ENCODE measurements at regions of chr1 and their contacts with region 1.

Region 1: GRCh38 chr1:202716654-202717053 is 6.4 kb upstream of the SYT2 start:
- DNase-seq: no peak
- H3K4me3 ChIP-seq: no peak overlapping the region
- H3K27ac ChIP-seq: no peak overlapping the region
- H3K4me1 ChIP-seq: no peaks in the 10 kb centered on the region
- H3K27me3 ChIP-seq: no peaks in the 10 kb centered on the region
- CTCF ChIP-seq: no peak

Region 2: DNA sequence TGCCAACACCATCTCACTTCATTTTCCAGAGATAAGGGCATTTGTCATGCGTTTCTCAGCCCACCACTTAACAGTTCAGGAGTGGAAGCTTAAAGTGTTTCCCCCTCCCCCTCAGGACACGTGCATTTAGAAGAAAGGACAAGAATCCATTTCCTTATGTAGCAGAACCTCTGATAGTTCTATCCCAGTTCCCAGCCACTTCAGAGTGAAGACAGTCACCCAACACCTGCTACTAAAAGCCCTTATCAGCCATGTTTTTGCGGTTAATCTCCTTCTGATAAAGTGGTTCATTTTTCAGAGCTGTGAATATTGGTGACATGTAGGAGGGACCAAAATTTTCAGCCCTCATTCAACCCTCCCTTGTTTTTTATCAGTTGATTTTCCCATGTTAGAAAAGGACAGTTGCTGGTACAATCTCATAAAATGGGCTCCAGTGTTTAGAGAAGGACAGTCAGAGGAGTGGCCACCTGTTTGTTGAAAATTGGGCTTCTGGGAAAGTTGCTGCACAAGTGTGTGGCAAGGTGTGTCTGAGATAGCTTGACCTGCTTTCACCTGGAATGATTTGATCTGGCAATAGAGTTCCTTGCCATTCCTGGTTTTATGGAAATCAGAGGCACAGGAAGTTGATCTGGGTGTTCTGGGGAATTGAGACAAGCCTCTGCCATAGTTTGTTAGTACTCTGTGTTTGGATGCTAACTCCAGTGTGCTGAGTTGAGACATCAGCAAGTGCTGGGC is 254.1 kb before region 1 on chr1:
- CTCF ChIA-PET with region 1: interaction called, 13 read pairs
- POLR2A ChIA-PET with region 1: no interaction called
- intact Hi-C with region 1: loop called (anchors 5 kb)
- DNase-seq: no peak
- H3K4me3 ChIP-seq: no peak overlapping the region
- H3K27ac ChIP-seq: no peak overlapping the region
- H3K4me1 ChIP-seq: no peaks in the 10 kb centered on the region
- H3K27me3 ChIP-seq: no peaks in the 10 kb centered on the region
- CTCF ChIP-seq: no peak

Region 3: DNA sequence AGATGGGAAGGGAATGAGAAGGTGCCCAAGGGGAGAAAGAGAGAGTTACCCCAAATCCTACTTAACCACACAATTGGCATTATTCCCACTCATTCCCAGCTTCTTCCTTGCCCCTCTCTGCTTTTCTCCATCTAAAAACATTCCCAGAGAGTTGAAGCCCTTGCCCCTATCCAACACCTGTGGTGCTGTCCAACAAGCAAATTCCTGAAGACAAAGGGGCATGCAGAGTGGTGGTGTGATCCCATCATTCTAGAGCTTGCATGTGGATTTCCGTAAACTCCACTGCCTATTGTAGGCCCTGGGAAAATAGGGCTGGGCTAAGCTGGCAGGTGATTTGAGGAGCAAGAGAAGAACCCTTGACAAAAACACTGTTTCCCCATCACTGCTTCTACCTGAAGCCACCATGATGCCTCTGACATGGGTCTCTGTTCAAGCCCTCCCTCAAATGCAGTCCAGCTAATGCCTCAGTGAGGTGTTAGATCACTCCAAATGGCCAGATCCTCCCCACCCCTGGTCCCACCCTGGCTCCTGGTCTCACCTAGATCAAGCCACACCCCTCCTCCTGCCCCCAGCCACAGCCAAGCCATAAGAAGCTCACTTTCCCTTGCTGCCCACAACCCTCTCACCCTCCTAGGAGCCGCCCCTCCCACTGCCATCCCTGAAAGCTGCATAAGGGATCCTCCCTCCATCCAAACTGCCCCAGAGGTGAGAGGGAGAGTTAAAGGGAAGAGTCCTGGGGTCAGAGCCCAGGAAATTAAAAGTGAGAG is 35.9 kb before region 1 on chr1:
- CTCF ChIA-PET with region 1: interaction called, 10 read pairs
- POLR2A ChIA-PET with region 1: no interaction called
- intact Hi-C with region 1: no loop called
- DNase-seq: no peak
- H3K4me3 ChIP-seq: no peak overlapping the region
- H3K27ac ChIP-seq: no peak overlapping the region
- H3K4me1 ChIP-seq: no peaks in the 10 kb centered on the region
- H3K27me3 ChIP-seq: peaks cover 37% of the 10 kb centered on the region
- CTCF ChIP-seq: no peak

Region 4: GRCh38 chr1:202781180-202781579 is 64.5 kb after region 1 on chr1:
- CTCF ChIA-PET with region 1: no interaction called
- POLR2A ChIA-PET with region 1: no interaction called
- intact Hi-C with region 1: no loop called
- DNase-seq: no peak
- H3K4me3 ChIP-seq: no peak overlapping the region
- H3K27ac ChIP-seq: no peak overlapping the region
- H3K4me1 ChIP-seq: no peaks in the 10 kb centered on the region
- H3K27me3 ChIP-seq: no peaks in the 10 kb centered on the region
- CTCF ChIP-seq: no peak